Cardiac septum (tissue), 1 donor: ENCODE measurements at regions of chr6 and their contacts with region 1.

Region 1: GRCh38 chr6:7974938-7975763 is 64.6 kb upstream of the TXNDC5 start:
- DNase-seq: peak; percentile 91

Region 2: DNA sequence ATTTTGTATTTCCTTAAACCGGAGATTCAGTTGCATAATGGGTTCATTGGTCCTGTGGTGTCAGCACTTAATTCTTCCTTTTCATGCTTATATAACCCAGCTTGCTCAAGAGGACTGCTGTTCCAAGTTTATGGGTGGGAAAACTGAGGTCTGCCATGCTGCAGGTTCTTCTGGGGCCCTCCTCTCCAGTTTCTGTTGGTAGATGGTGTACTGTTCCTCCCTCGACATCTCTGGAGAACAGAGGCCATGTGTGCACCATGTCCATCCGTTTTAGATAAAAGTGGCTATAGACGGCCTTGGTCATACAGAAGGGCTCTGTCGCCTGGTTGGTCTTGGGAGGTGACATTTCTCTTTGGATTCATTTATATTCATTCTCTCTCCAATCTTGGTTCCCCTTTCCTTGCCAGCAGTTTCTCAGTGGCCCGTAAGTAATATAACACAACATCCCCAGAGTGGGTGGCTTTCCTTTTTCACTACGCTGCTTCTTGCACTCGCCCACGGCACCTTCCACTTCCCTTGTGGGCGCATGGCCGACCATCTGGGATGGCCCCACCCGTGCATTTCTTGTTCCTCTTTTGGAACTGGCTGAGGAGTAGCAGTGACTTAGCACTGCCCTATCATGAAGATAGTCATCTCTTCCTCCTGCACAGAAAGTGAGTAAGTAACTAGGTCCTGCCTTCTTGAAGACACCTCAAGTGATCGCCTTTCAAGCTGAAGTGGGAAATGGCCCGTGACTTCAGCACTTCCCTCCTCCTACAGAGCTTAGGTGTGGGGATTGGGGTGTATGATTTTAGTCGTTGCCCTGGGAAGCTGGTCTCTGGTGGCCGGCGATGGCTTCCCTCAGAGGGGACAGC is 773.2 kb before region 1 on chr6:
- intact Hi-C with region 1: no loop called
- DNase-seq: peak; percentile 82

Region 3: GRCh38 chr6:7859591-7859990 is 115.6 kb before region 1 on chr6:
- intact Hi-C with region 1: no loop called
- DNase-seq: no peak

Region 4: GRCh38 chr6:7910654-7911344 is 64.4 kb before region 1 on chr6 and contains the start of gene TXNDC5:
- intact Hi-C with region 1: loop called (anchors 2 kb)
- DNase-seq: peak; percentile 90
- total RNA-seq, gene TXNDC5: 50.8 TPM

Region 5: GRCh38 chr6:8088886-8089285 is 113.7 kb after region 1 on chr6:
- intact Hi-C with region 1: no loop called
- DNase-seq: no peak